ENCODE measurements at regions of chr14 and their contacts with region 1.

Region 1: GRCh38 chr14:81436296-81437138 is 36.4 kb upstream of the STON2 start:
- DNase-seq: peak; percentile 84
- H3K4me3 ChIP-seq: peak overlapping the region; percentile 46 to 78 (median 69)
- H3K27ac ChIP-seq: peak overlapping the region; percentile 25
- H3K4me1 ChIP-seq: peaks cover 41% of the 10 kb centered on the region
- H3K27me3 ChIP-seq: no peaks in the 10 kb centered on the region
- CTCF ChIP-seq: no peak

Region 2: GRCh38 chr14:81315341-81315740 is 121.2 kb before region 1 on chr14:
- CTCF ChIA-PET with region 1: no interaction called
- dilution Hi-C with region 1: loop called (anchors 10 kb)
- in situ Hi-C with region 1: no loop called
- intact Hi-C with region 1: loop called (anchors 1 kb)
- DNase-seq: no peak
- H3K4me3 ChIP-seq: no peak overlapping the region
- H3K27ac ChIP-seq: peak overlapping the region; percentile 88
- H3K4me1 ChIP-seq: peaks cover 58% of the 10 kb centered on the region
- H3K27me3 ChIP-seq: no peaks in the 10 kb centered on the region
- CTCF ChIP-seq: no peak

Region 3: DNA sequence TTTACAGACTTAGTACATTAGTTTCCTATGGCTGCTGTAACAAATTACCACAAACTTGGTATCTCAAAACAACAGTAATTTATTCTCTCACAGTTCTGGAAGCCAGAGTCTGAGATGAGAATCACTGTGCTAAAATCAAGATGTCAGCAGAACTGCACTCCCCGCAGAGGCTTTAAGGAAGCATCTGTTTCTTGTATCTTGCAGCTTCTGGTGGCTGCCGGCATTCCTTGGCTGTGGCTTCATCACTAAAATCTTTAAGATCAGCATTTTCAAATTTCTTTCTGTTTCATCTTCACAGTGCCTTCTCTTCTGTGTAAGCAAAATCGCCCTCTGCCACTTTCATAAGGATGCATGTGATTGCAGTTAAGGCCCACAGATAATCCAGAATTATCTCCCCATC is 45.8 kb before region 1 on chr14:
- CTCF ChIA-PET with region 1: no interaction called
- dilution Hi-C with region 1: no loop called
- in situ Hi-C with region 1: loop called in 1 of 2 experiments (anchors 10 kb)
- intact Hi-C with region 1: loop called (anchors 1 kb)
- DNase-seq: no peak
- H3K4me3 ChIP-seq: no peak overlapping the region
- H3K27ac ChIP-seq: no peak overlapping the region
- H3K4me1 ChIP-seq: peaks cover 21% of the 10 kb centered on the region
- H3K27me3 ChIP-seq: no peaks in the 10 kb centered on the region
- CTCF ChIP-seq: no peak

Measured in mammary epithelial cell (primary cell).